Sigmoid colon (tissue), 7 donors: ENCODE measurements at regions of chr12 and their contacts with region 1.

Region 1: GRCh38 chr12:118120579-118121363 is 15.2 kb upstream of the PEBP1 start:
- DNase-seq: peak; percentile 84
- H3K4me3 ChIP-seq: no peak overlapping the region
- H3K27ac ChIP-seq: peak overlapping the region in 2 of 4 donors; percentile 19 to 38
- H3K4me1 ChIP-seq: peaks cover 0 to 8% (median 6%) of the 10 kb centered on the region in 4 donors
- H3K27me3 ChIP-seq: no peaks in the 10 kb centered on the region
- CTCF ChIP-seq: peak in 2 of 4 experiments; percentile 15 to 70
- EP300 ChIP-seq: no peak
- POLR2A ChIP-seq: no peak

Region 2: GRCh38 chr12:118145113-118145797 is 24.5 kb after region 1 on chr12:
- intact Hi-C with region 1: no loop called
- DNase-seq: no peak
- H3K4me3 ChIP-seq: no peak overlapping the region
- H3K27ac ChIP-seq: no peak overlapping the region
- H3K4me1 ChIP-seq: no peaks in the 10 kb centered on the region
- H3K27me3 ChIP-seq: no peaks in the 10 kb centered on the region
- CTCF ChIP-seq: no peak
- EP300 ChIP-seq: no peak
- POLR2A ChIP-seq: no peak

Region 3: GRCh38 chr12:118183705-118184104 is 62.9 kb after region 1 on chr12:
- intact Hi-C with region 1: loop called (anchors 5 kb)
- DNase-seq: no peak
- H3K4me3 ChIP-seq: no peak overlapping the region
- H3K27ac ChIP-seq: no peak overlapping the region
- H3K4me1 ChIP-seq: peaks cover 0 to 38% (median 28%) of the 10 kb centered on the region in 4 donors
- H3K27me3 ChIP-seq: no peaks in the 10 kb centered on the region
- CTCF ChIP-seq: no peak
- EP300 ChIP-seq: no peak
- POLR2A ChIP-seq: no peak